A673 (cell line): ENCODE measurements at regions of chr20 and their contacts with region 1.

Region 1: GRCh38 chr20:4217349-4217773 is 202.0 kb upstream of the RNF24 start:
- DNase-seq: no peak
- H3K4me3 ChIP-seq: no peak overlapping the region
- H3K27ac ChIP-seq: peak overlapping the region; percentile 16
- H3K4me1 ChIP-seq: peaks cover 22% of the 10 kb centered on the region
- H3K27me3 ChIP-seq: no peaks in the 10 kb centered on the region
- CTCF ChIP-seq: no peak

Region 2: GRCh38 chr20:4202441-4202840 is 14.9 kb before region 1 on chr20:
- CTCF ChIA-PET with region 1: no interaction called
- POLR2A ChIA-PET with region 1: interaction called, 12 read pairs
- intact Hi-C with region 1: no loop called
- DNase-seq: no peak
- H3K4me3 ChIP-seq: no peak overlapping the region
- H3K27ac ChIP-seq: no peak overlapping the region
- H3K4me1 ChIP-seq: no peaks in the 10 kb centered on the region
- H3K27me3 ChIP-seq: no peaks in the 10 kb centered on the region
- CTCF ChIP-seq: no peak

Region 3: DNA sequence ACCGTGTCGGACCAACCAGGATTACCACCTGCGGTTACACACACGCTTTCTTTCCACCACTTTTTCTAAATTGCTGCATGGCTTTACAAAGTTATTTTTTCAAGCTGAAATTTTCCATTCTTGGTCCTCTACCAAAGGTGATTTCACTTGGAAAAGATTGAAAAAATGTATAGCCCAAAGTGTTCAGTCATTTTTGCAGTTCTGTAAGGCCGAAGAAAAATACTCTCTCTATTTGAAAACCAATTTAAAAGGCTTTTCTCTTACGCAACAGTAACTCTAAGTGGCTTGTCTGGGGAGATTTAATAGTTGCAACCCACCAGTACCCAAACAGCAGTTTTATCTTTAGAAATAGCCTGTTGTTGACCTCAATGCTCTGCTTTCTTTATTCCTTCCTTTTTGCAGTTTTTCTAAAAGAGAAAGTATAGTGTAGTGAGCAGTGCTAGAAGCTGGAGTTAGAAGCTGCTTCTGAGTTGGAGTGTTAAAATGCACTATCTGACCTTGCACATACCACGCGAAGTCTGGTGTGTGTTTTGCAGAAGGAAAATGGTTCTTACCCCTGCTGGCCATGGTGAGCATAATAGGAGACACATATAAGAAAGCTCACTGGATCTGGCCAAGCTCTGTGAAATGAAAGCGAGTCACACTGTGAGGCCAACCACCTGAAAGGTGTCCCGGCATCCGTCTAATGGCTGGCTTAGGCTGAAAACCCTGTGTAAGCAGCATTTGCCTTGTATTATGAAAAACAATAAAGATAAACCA is 232.8 kb after region 1 on chr20:
- CTCF ChIA-PET with region 1: no interaction called
- POLR2A ChIA-PET with region 1: no interaction called
- intact Hi-C with region 1: no loop called
- DNase-seq: peak; percentile 78
- H3K4me3 ChIP-seq: peak overlapping the region; percentile 26
- H3K27ac ChIP-seq: peak overlapping the region; percentile 47
- H3K4me1 ChIP-seq: peaks cover 35% of the 10 kb centered on the region
- H3K27me3 ChIP-seq: no peaks in the 10 kb centered on the region
- CTCF ChIP-seq: peak; percentile 52